Activated CD8-positive, alpha-beta T cell treated with anti-CD3 and anti-CD28 coated beads, Interleukin-2, amount 10 ng/mL, durations not matched to agents 7 days and 5 days (primary cell): ENCODE measurements at regions of chrX and their contacts with region 1.

Region 1: DNA sequence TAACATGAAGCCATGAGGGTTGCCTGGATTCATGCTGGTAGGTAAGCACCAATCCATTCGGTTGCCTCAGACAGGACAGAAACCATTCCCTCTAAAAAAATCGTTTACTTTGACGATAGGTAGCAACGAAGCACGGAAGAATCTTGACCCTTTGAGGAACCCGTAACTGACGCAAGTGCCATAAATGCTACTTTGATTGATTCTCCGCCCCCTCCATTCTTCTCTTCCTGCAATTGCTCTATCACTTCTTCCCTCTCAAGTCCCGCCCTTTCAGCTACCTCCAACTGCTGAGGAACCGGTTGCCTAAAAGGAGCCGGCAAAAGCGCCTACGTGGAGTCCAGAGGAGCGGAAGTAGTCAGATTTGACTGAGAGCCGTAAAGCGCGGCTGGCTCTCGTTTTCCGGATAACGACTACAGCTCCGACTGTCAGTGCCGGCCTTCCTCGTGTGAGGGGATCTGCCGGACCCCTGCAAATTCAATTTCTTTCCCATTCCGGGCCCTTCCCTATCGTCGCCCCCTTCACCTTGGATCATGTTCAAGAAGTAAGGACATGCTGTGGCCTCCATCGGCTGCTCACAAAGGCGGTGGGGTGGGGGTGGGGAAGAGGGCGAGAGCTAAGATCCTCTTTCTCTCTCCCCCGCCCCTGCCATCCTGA is at the start of gene MCTS1:
- DNase-seq: peak; percentile 91
- ATAC-seq: peak; percentile 99
- H3K4me3 Mint-ChIP-seq: peak within 1 kb of the TSS; percentile 95
- H3K27ac Mint-ChIP-seq: peak within 1 kb of the TSS; percentile 99
- H3K4me1 Mint-ChIP-seq: peaks cover 8% of the 10 kb centered on the region
- H3K27me3 Mint-ChIP-seq: no peaks in the 10 kb centered on the region
- total RNA-seq, gene MCTS1: 56.0 to 60.5 TPM

Region 2: GRCh38 chrX:120629667-120630537 is 26.1 kb after region 1 on chrX and contains the start of gene C1GALT1C1:
- CTCF ChIA-PET with region 1: no interaction called
- POLR2A ChIA-PET with region 1: interaction called, 27 read pairs
- DNase-seq: peak; percentile 92
- ATAC-seq: peak; percentile 98
- H3K4me3 Mint-ChIP-seq: peak within 1 kb of the TSS; percentile 86
- H3K27ac Mint-ChIP-seq: peak within 1 kb of the TSS; percentile 98
- H3K4me1 Mint-ChIP-seq: peaks cover 24% of the 10 kb centered on the region
- H3K27me3 Mint-ChIP-seq: no peaks in the 10 kb centered on the region
- total RNA-seq, gene C1GALT1C1: 21.1 to 21.9 TPM

Region 3: DNA sequence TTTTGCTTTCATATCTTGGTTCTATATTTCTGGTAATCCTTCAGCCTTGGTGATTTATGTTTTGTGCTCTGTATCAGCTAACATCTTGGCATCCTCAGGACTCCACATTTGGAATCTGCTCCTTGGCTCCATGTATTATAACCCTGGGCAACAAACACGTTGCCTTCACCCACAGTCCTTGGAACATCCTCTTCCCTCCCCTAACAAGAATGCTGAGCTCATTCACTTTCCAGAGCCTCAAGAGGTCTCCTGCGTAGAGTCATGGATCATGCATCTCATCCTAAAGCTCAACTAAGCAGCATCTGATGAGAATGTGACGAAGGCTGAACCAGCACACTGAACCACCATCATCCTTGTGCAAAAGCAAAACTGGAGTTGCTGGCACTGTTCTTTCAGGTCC is 86.5 kb after region 1 on chrX:
- CTCF ChIA-PET with region 1: no interaction called
- POLR2A ChIA-PET with region 1: no interaction called
- DNase-seq: no peak
- ATAC-seq: no peak
- H3K4me3 Mint-ChIP-seq: no peak overlapping the region
- H3K27ac Mint-ChIP-seq: no peak overlapping the region
- H3K4me1 Mint-ChIP-seq: peaks cover 5% of the 10 kb centered on the region
- H3K27me3 Mint-ChIP-seq: no peaks in the 10 kb centered on the region